Activated CD4-positive, alpha-beta memory T cell treated with anti-CD3 and anti-CD28 coated beads for 36 hours (primary cell): ENCODE measurements at regions of chr18 and their contacts with region 1.

Region 1: DNA sequence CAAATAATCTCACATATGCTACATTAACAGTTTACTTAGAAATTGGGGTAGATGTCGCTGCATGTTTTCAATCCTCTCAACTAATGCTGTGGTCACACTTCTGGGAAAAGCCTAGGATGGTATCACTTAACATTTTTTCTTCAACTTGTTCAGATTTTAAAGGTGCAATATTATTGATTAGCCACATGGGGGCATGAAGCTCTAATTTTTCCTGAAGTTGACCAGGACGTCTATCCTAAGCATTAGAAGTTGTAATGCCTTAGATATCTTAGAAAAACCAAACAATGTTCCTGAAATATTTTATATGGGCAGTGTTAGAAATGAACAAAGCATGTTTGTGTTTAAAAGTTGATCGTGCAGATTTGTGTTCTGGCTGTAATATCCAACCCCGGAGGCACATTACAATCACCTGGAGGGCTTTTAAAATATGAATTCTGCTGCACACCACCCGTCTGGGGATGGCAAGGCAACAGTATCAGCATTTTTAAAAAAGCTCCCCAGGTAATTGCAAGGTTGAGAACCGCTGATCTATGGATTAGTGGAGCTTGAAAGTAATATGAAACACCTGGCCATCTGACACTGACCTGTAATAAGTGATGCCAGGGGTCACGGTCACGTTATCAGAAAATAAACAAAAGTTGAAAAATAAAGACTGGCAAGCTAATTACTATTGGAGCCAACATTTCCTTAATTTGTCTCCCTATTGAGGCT is 100.5 kb upstream of the LMAN1 start:
- DNase-seq: no peak
- H3K4me3 Mint-ChIP-seq: no peak overlapping the region
- H3K27ac Mint-ChIP-seq: no peak overlapping the region
- H3K4me1 Mint-ChIP-seq: no peaks in the 10 kb centered on the region
- H3K27me3 Mint-ChIP-seq: peaks cover 5% of the 10 kb centered on the region

Region 2: GRCh38 chr18:59448546-59448945 is 11.0 kb before region 1 on chr18:
- CTCF ChIA-PET with region 1: interaction called, 10 read pairs
- POLR2A ChIA-PET with region 1: no interaction called
- intact Hi-C with region 1: no loop called
- DNase-seq: no peak
- H3K4me3 Mint-ChIP-seq: no peak overlapping the region
- H3K27ac Mint-ChIP-seq: no peak overlapping the region
- H3K4me1 Mint-ChIP-seq: no peaks in the 10 kb centered on the region
- H3K27me3 Mint-ChIP-seq: no peaks in the 10 kb centered on the region

Region 3: GRCh38 chr18:59470561-59471121 is 11.1 kb after region 1 on chr18:
- CTCF ChIA-PET with region 1: interaction called, 16 read pairs
- POLR2A ChIA-PET with region 1: no interaction called
- intact Hi-C with region 1: no loop called
- DNase-seq: no peak
- H3K4me3 Mint-ChIP-seq: no peak overlapping the region
- H3K27ac Mint-ChIP-seq: no peak overlapping the region
- H3K4me1 Mint-ChIP-seq: no peaks in the 10 kb centered on the region
- H3K27me3 Mint-ChIP-seq: peaks cover 12% of the 10 kb centered on the region

Region 4: GRCh38 chr18:59517446-59518165 is 58.1 kb after region 1 on chr18:
- CTCF ChIA-PET with region 1: no interaction called
- POLR2A ChIA-PET with region 1: no interaction called
- intact Hi-C with region 1: no loop called
- DNase-seq: no peak
- H3K4me3 Mint-ChIP-seq: no peak overlapping the region
- H3K27ac Mint-ChIP-seq: no peak overlapping the region
- H3K4me1 Mint-ChIP-seq: no peaks in the 10 kb centered on the region
- H3K27me3 Mint-ChIP-seq: peaks cover 3% of the 10 kb centered on the region

Region 5: DNA sequence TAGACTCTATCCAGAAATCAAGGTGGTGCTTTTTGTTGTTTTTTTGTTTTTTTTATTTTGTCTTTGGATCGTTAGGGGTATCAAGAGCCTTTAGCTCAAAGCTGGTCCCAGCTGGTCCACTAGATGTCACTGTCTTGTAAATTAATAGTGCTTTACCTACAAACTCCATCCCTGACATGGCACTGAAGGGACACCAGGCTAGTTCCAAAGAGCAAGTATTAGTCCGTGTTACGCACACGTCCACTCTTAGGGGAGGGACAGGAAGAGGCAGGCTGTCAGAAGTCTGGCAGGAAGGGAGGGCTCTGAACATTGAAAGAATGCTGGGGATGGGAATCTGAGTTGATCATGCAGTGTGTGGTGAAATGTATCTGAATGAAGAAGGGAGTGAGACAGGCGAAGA is 323.6 kb after region 1 on chr18:
- CTCF ChIA-PET with region 1: no interaction called
- POLR2A ChIA-PET with region 1: no interaction called
- intact Hi-C with region 1: no loop called
- DNase-seq: peak; percentile 25
- H3K4me3 Mint-ChIP-seq: no peak overlapping the region
- H3K27ac Mint-ChIP-seq: no peak overlapping the region
- H3K4me1 Mint-ChIP-seq: no peaks in the 10 kb centered on the region
- H3K27me3 Mint-ChIP-seq: peaks cover 5% of the 10 kb centered on the region